ENCODE measurements at regions of chr1 and their contacts with region 1.

Region 1: DNA sequence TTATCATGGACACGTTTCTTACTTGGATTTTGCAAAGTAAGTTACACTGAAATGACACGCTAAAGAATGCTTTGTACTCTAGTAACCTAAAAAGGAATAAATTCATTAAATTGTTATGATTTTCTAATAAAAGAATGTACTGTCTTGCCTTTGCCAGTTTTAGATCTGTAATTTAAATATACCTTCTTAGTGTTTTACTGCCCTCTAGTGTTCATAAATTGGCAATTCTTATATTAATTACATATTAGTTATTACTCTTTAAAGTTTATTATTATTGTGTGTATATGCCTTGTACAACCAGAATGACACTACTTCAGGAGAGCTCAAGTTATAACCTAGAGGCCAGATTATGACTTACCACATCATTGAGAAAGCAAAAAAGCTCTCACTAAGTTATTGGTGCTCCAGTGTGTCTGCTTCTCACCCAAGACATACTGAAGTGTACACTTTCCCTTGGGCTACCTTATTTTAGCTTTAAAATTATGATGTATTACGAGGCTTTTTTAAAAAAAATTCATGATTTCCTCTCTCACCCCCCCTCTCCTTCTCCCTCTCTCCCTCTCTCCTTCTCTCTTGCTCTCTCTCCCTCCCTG is 169.9 kb downstream of the HS2ST1 start:
- DNase-seq: no peak
- ATAC-seq: peak; percentile 83
- H3K4me3 ChIP-seq: no peak overlapping the region
- H3K27ac ChIP-seq: no peak overlapping the region; the same call in 1 of the 2 replicates
- H3K4me1 ChIP-seq: peaks cover 3% of the 10 kb centered on the region; the same call in 1 of the 2 replicates
- H3K27me3 ChIP-seq: no peaks in the 10 kb centered on the region
- CTCF ChIP-seq: peak in 2 of 3 experiments; percentile 27 to 34; a peak in 2 of 6 replicates
- EP300 ChIP-seq: no peak
- POLR2A ChIP-seq: no peak
- RAD21 ChIP-seq: peak; percentile 66

Region 2: DNA sequence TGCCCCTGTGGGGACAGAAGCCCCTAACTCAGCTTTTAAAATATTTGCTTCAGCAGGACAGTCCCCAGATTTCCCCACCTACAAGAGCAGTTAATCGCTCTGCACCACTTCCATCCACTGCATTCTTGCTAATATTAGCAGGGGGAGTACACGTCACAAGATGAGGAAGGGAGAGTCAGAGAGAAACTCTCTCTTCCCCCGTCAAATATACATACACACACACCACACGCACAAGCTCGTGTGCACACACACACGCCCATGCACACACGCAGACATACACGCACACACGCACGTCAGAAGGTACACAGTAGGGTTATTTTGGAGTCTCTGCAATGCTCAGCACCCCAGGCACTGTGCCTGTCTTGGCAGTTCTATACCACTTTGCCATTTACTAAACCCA is 613.5 kb before region 1 on chr1:
- CTCF ChIA-PET with region 1: no interaction called
- POLR2A ChIA-PET with region 1: no interaction called
- RAD21 ChIA-PET with region 1: no interaction called
- SMC1A ChIA-PET with region 1: no interaction called
- in situ Hi-C with region 1: no loop called
- intact Hi-C with region 1: loop called (anchors 10 kb)
- DNase-seq: no peak
- ATAC-seq: peak; percentile 66
- H3K4me3 ChIP-seq: no peak overlapping the region
- H3K27ac ChIP-seq: no peak overlapping the region
- H3K4me1 ChIP-seq: peaks cover 3% of the 10 kb centered on the region; the same call in 1 of the 2 replicates
- H3K27me3 ChIP-seq: no peaks in the 10 kb centered on the region; a peak in 2 of 4 replicates
- CTCF ChIP-seq: no peak
- EP300 ChIP-seq: no peak
- POLR2A ChIP-seq: no peak
- RAD21 ChIP-seq: no peak

Region 3: DNA sequence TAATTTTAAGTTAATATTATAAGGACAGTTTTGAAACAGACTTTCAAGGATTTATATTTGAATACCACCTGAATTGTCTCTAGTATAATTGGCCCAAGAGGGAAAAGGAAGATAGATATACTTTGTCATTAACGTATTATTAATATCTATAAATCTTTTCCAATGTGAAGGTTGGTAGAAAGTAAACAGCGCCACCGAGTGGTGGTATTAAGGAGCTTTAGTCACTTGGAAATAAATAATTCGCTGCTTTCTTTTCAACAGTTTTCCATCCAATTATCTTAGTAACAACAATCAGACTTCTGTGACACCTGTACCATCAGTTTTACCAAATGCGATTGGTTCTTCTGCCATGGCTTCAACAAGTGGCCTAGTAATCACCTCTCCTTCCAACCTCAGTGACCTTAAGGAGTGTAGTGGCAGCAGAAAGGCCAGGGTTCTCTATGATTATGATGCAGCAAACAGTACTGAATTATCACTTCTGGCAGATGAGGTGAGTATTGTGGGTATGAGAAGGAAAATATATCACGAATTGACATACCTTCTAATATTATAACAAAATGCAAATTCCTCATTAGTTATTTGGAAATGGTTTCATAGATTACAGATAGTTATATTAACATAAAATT is 342.3 kb before region 1 on chr1:
- CTCF ChIA-PET with region 1: interaction called, 13 read pairs
- POLR2A ChIA-PET with region 1: no interaction called
- RAD21 ChIA-PET with region 1: no interaction called
- SMC1A ChIA-PET with region 1: no interaction called
- in situ Hi-C with region 1: no loop called
- intact Hi-C with region 1: no loop called
- DNase-seq: no peak
- ATAC-seq: peak; percentile 45; the same call in 1 of the 3 replicates
- H3K4me3 ChIP-seq: no peak overlapping the region
- H3K27ac ChIP-seq: no peak overlapping the region
- H3K4me1 ChIP-seq: no peaks in the 10 kb centered on the region
- H3K27me3 ChIP-seq: no peaks in the 10 kb centered on the region
- CTCF ChIP-seq: peak; percentile 39 to 51 (median 46); a peak in 5 of 6 replicates
- EP300 ChIP-seq: no peak
- POLR2A ChIP-seq: no peak
- RAD21 ChIP-seq: peak; percentile 55

Region 4: DNA sequence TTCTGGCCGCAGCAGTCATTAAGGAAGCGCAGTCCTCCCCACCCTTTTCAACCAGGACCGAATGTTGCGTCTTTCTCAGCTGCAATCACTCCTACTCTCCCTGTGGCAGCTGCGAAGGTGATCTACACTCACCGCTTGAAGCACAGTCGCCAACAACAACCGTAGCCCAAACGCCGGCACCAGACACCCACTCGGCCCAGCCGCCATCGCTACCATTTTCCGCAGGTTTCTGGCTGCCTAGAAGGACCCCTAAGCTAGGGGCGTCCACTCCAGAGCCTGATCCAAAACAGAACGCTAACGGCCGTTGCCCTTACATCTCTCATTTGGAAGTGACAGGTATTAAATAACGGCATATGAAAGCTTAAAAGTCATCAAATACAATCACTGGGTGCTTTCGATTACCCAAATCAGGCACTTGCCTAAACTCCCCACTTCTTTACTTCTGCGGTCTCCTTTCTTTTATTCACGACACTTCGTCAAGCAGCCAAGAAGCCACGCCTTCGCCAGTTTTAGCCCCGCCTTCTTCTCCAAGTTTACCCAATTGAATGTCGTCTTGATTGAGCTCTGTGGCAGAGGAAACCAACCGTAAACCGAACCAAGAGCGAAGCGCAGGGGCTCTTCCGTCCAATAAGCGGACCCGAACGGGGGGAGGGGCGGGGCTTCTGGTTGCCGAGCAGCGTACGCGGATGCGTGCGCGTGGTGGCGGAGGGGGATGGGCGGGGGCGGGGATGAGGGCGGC is 170.3 kb before region 1 on chr1 and contains the start of gene SELENOF:
- CTCF ChIA-PET with region 1: interaction called, 35 read pairs
- POLR2A ChIA-PET with region 1: no interaction called
- RAD21 ChIA-PET with region 1: interaction called, 45 read pairs
- SMC1A ChIA-PET with region 1: interaction called, 71 read pairs
- in situ Hi-C with region 1: no loop called
- intact Hi-C with region 1: loop called (anchors 5 kb)
- DNase-seq: peak; percentile 100
- ATAC-seq: peak; percentile 88
- H3K4me3 ChIP-seq: peak within 1 kb of the TSS; percentile 100
- H3K27ac ChIP-seq: peak within 1 kb of the TSS; percentile 92
- H3K4me1 ChIP-seq: no peaks in the 10 kb centered on the region
- H3K27me3 ChIP-seq: no peaks in the 10 kb centered on the region
- CTCF ChIP-seq: no peak
- EP300 ChIP-seq: no peak
- POLR2A ChIP-seq: peak; percentile 90
- RAD21 ChIP-seq: no peak
- polyA plus RNA-seq, gene SELENOF: 226 to 254 TPM

Region 5: GRCh38 chr1:87000460-87000859 is 83.9 kb before region 1 on chr1:
- CTCF ChIA-PET with region 1: interaction called, 10 read pairs
- POLR2A ChIA-PET with region 1: no interaction called
- RAD21 ChIA-PET with region 1: no interaction called
- SMC1A ChIA-PET with region 1: interaction called, 3 read pairs
- in situ Hi-C with region 1: no loop called
- intact Hi-C with region 1: no loop called
- DNase-seq: no peak
- ATAC-seq: no peak
- H3K4me3 ChIP-seq: no peak overlapping the region
- H3K27ac ChIP-seq: no peak overlapping the region
- H3K4me1 ChIP-seq: no peaks in the 10 kb centered on the region
- H3K27me3 ChIP-seq: no peaks in the 10 kb centered on the region
- CTCF ChIP-seq: no peak
- EP300 ChIP-seq: no peak
- POLR2A ChIP-seq: no peak
- RAD21 ChIP-seq: no peak

Region 6: GRCh38 chr1:87045761-87046304 is 38.5 kb before region 1 on chr1:
- CTCF ChIA-PET with region 1: interaction called, 26 read pairs
- POLR2A ChIA-PET with region 1: no interaction called
- RAD21 ChIA-PET with region 1: interaction called, 32 read pairs
- SMC1A ChIA-PET with region 1: interaction called, 38 read pairs
- in situ Hi-C with region 1: no loop called
- intact Hi-C with region 1: no loop called
- DNase-seq: no peak
- ATAC-seq: peak; percentile 78
- H3K4me3 ChIP-seq: no peak overlapping the region
- H3K27ac ChIP-seq: peak overlapping the region; percentile 41
- H3K4me1 ChIP-seq: peaks cover 14% of the 10 kb centered on the region
- H3K27me3 ChIP-seq: no peaks in the 10 kb centered on the region
- CTCF ChIP-seq: no peak
- EP300 ChIP-seq: no peak
- POLR2A ChIP-seq: no peak
- RAD21 ChIP-seq: no peak

Region 7: GRCh38 chr1:87226341-87226760 is 142.0 kb after region 1 on chr1:
- CTCF ChIA-PET with region 1: no interaction called
- POLR2A ChIA-PET with region 1: no interaction called
- RAD21 ChIA-PET with region 1: no interaction called
- SMC1A ChIA-PET with region 1: no interaction called
- in situ Hi-C with region 1: no loop called
- intact Hi-C with region 1: no loop called
- DNase-seq: no peak
- ATAC-seq: peak; percentile 71
- H3K4me3 ChIP-seq: no peak overlapping the region
- H3K27ac ChIP-seq: no peak overlapping the region
- H3K4me1 ChIP-seq: peaks cover 7% of the 10 kb centered on the region; the same call in 1 of the 2 replicates
- H3K27me3 ChIP-seq: no peaks in the 10 kb centered on the region
- CTCF ChIP-seq: no peak
- EP300 ChIP-seq: no peak
- POLR2A ChIP-seq: no peak
- RAD21 ChIP-seq: no peak